B cell (primary cell): ENCODE measurements at regions of chr18 and their contacts with region 1.

Region 1: DNA sequence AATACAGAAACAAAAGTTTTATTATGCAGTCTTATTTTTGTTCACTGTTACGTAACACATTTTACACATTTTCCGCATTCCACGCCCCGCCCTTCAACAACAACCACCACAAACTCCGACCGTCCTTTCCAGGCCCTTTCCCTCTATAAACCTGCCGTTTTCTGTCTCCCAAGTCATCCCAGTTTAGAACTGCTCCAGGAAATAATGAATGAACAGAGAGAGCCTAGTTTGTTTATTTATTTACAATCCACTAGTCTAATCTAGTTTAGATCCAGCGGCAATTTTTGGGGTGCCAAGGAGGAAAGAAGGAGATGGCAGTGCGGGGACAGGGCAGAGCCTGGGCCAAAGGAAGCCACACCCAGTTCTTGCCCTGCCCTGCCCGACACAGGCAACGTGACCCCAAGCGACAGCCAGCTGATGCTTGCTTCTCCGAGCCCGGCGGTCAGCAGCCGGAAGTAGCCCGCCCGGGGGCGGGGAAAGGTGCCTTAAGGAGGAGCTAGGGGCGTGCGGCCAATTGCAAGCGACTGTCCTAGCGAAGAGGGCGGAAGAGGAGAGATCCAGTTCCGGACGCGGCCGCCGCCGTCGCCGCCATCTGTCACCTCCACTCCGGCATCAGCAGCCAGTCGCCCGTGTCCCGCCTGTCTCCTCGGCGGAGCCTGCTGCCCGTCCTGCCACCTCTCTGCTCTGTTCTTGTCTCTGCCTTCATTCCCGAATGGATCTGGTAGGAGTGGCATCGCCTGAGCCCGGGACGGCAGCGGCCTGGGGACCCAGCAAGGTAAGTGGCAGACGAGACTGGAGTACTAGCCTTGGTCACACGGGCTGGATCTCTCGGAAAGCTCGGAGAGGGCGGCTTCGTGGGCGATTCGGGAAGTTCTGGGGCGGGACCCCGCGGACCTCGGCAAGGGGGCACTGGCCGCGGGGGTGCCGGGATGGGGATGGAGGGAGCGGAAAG is at the start of gene RIOK3:
- DNase-seq: peak; percentile 93
- ATAC-seq: peak; percentile 96
- H3K4me3 ChIP-seq: peak within 1 kb of the TSS; percentile 78 to 94 (median 89)
- H3K4me3 Mint-ChIP-seq: peak within 1 kb of the TSS; percentile 100
- H3K27ac ChIP-seq: peak within 1 kb of the TSS; percentile 84 to 96
- H3K27ac Mint-ChIP-seq: peak within 1 kb of the TSS; percentile 90
- H3K4me1 ChIP-seq: peaks cover 34 to 36% of the 10 kb centered on the region in 2 donors
- H3K4me1 Mint-ChIP-seq: peaks cover 59% of the 10 kb centered on the region
- H3K27me3 ChIP-seq: no peaks in the 10 kb centered on the region
- H3K27me3 Mint-ChIP-seq: no peaks in the 10 kb centered on the region
- CTCF ChIP-seq: no peak
- total RNA-seq, gene RIOK3: 83.4 and 85.1 TPM in 2 replicates

Region 2: GRCh38 chr18:23437357-23438045 is 15.5 kb before region 1 on chr18:
- CTCF ChIA-PET with region 1: no interaction called
- POLR2A ChIA-PET with region 1: interaction called, 3 read pairs
- intact Hi-C with region 1: loop called (anchors 1 kb)
- DNase-seq: peak; percentile 80
- ATAC-seq: peak; percentile 100
- H3K4me3 ChIP-seq: peak overlapping the region; percentile 75 to 95 (median 92)
- H3K4me3 Mint-ChIP-seq: peak overlapping the region; percentile 92
- H3K27ac ChIP-seq: peak overlapping the region; percentile 16 to 70
- H3K27ac Mint-ChIP-seq: peak overlapping the region; percentile 67
- H3K4me1 ChIP-seq: peaks cover 11 to 20% of the 10 kb centered on the region in 2 donors
- H3K4me1 Mint-ChIP-seq: peaks cover 16% of the 10 kb centered on the region
- H3K27me3 ChIP-seq: no peaks in the 10 kb centered on the region
- H3K27me3 Mint-ChIP-seq: no peaks in the 10 kb centered on the region
- CTCF ChIP-seq: no peak

Region 3: GRCh38 chr18:23479829-23480505 is 27.0 kb after region 1 on chr18:
- CTCF ChIA-PET with region 1: interaction called, 4 read pairs
- POLR2A ChIA-PET with region 1: interaction called, 9 read pairs
- intact Hi-C with region 1: loop called (anchors 2 kb)
- DNase-seq: peak; percentile 79
- ATAC-seq: peak; percentile 86
- H3K4me3 ChIP-seq: peak overlapping the region in 3 of 5 experiments; percentile 0 to 29 (median 3)
- H3K4me3 Mint-ChIP-seq: peak overlapping the region; percentile 77
- H3K27ac ChIP-seq: peak overlapping the region; percentile 73 to 86
- H3K27ac Mint-ChIP-seq: peak overlapping the region; percentile 88
- H3K4me1 ChIP-seq: peaks cover 51 to 60% of the 10 kb centered on the region in 2 donors
- H3K4me1 Mint-ChIP-seq: peaks cover 58% of the 10 kb centered on the region
- H3K27me3 ChIP-seq: no peaks in the 10 kb centered on the region
- H3K27me3 Mint-ChIP-seq: no peaks in the 10 kb centered on the region
- CTCF ChIP-seq: no peak

Region 4: DNA sequence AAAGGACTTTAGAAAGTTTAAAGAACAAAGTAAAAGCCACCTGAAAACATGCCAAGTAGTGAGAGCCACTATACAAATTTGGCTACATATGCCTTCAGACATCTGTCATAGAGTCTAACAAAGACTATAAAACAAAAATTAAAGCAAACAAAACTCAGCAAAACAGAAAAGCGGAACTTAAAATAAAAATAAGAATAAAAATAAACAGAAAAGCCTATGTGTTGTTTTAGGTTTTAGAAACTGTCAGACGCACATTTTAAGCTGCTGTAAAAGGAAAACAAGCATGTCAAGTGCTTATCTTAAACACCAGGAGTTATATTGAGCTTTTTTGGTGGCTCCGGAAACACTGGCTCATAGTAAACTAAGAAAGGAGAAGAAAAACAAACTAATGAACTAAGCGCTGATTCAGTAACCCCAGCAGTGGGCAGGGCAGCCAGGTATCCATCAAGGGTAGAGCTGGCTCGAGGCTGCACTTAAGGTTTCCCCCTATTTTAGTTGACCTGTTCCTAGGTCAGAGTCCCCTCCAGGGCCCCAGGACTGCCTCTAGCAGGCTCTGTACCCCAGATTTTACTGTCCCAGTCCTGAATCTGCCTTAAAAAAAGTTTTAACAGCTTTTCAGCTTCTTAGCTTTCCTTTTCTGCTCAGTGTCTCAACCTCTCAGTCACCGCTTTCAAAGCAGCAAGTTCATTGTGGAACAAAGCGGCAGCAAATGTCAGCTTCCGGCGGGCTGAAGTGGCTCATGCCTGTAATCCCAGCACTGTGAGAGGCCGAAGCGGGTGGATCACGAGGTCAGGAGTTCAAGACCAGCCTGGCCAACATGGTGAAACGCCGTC is 35.0 kb after region 1 on chr18:
- CTCF ChIA-PET with region 1: interaction called, 10 read pairs
- POLR2A ChIA-PET with region 1: interaction called, 3 read pairs
- intact Hi-C with region 1: no loop called
- DNase-seq: peak; percentile 69
- ATAC-seq: peak; percentile 85
- H3K4me3 ChIP-seq: peak overlapping the region; percentile 33 to 64 (median 51)
- H3K4me3 Mint-ChIP-seq: peak overlapping the region; percentile 89
- H3K27ac ChIP-seq: peak overlapping the region; percentile 94 to 96
- H3K27ac Mint-ChIP-seq: peak overlapping the region; percentile 98
- H3K4me1 ChIP-seq: peaks cover 53 to 56% of the 10 kb centered on the region in 2 donors
- H3K4me1 Mint-ChIP-seq: peaks cover 54% of the 10 kb centered on the region
- H3K27me3 ChIP-seq: no peaks in the 10 kb centered on the region
- H3K27me3 Mint-ChIP-seq: no peaks in the 10 kb centered on the region
- CTCF ChIP-seq: no peak